ENCODE measurements at regions of chr22 and their contacts with region 1.

Region 1: GRCh38 chr22:41666661-41667258 is 21.9 kb downstream of the SNU13 start:
- DNase-seq: peak; percentile 85 to 92
- ATAC-seq: peak; percentile 87 to 90
- H3K4me3 ChIP-seq: peak overlapping the region; percentile 40
- H3K27ac ChIP-seq: peak overlapping the region; percentile 90 to 97
- H3K4me1 ChIP-seq: peaks cover 41% of the 10 kb centered on the region
- CTCF ChIP-seq: peak; percentile 94
- EP300 ChIP-seq: no peak
- POLR2A ChIP-seq: peak; percentile 41; the same call in 1 of the 2 replicates
- RAD21 ChIP-seq: peak; percentile 57 to 65

Region 2: GRCh38 chr22:41563051-41563711 is 103.6 kb before region 1 on chr22:
- CTCF ChIA-PET with region 1: no interaction called
- POLR2A ChIA-PET with region 1: no interaction called
- DNase-seq: peak; percentile 44 to 53
- ATAC-seq: peak; percentile 36 to 42; a peak in 4 of 6 replicates
- H3K4me3 ChIP-seq: no peak overlapping the region
- H3K27ac ChIP-seq: peak overlapping the region; percentile 63 to 82
- H3K4me1 ChIP-seq: peaks cover 61% of the 10 kb centered on the region
- CTCF ChIP-seq: no peak
- EP300 ChIP-seq: no peak
- POLR2A ChIP-seq: no peak
- RAD21 ChIP-seq: no peak

Region 3: GRCh38 chr22:41589391-41590241 is 77.1 kb before region 1 on chr22 and contains the start of gene PMM1:
- CTCF ChIA-PET with region 1: no interaction called
- POLR2A ChIA-PET with region 1: interaction called, 16 read pairs
- DNase-seq: peak; percentile 93 to 99
- ATAC-seq: peak; percentile 95 to 96
- H3K4me3 ChIP-seq: peak within 1 kb of the TSS; percentile 82
- H3K27ac ChIP-seq: peak within 1 kb of the TSS; percentile 78 to 97
- H3K4me1 ChIP-seq: peaks cover 21% of the 10 kb centered on the region
- CTCF ChIP-seq: no peak
- EP300 ChIP-seq: no peak
- POLR2A ChIP-seq: peak; percentile 72
- RAD21 ChIP-seq: no peak
- polyA plus RNA-seq, gene PMM1: 26.2 and 28.7 TPM in 2 replicates

Region 4: DNA sequence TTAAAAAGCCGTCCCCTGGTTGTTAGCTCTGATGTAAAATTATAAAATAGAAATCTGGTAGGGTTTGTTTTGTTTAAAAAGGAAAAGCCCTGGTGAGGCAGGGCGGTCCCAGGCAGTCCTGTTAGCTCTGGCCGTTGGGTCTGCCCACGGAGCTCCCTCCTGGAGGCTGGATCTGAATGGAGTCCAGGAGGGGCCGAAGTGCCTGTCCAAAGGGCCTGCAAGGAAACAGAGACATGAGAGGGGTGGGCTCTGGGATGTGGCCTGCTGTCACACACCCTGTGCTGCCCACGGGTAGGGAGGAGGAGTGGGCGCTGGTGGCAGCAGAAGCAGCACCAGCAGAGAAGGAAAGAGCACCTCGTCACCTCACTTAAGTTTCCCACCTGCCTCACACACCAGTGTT is 65.8 kb before region 1 on chr22:
- CTCF ChIA-PET with region 1: no interaction called
- POLR2A ChIA-PET with region 1: no interaction called
- DNase-seq: no peak
- ATAC-seq: no peak
- H3K4me3 ChIP-seq: no peak overlapping the region
- H3K27ac ChIP-seq: no peak overlapping the region
- H3K4me1 ChIP-seq: peaks cover 23% of the 10 kb centered on the region
- CTCF ChIP-seq: no peak
- EP300 ChIP-seq: no peak
- POLR2A ChIP-seq: no peak
- RAD21 ChIP-seq: no peak

Region 5: DNA sequence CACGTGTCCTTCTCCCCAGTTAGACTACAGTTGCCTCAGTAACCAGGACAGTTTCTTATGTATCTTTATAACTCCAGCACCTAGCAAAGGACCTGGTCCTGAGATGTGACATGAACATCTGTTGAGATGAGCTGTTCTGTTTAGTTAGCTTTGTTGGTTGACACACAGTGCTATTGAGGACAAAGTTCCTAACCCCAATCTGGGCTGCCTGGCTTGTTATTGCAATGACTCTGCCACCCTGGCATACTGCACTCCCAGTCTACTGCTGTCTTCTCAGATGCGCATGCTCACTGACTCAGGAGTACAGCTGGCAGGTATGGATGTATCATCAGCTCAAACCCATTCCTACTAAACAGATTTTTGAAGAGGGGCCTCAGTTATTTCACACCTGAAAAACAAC is 53.3 kb before region 1 on chr22:
- CTCF ChIA-PET with region 1: no interaction called
- POLR2A ChIA-PET with region 1: no interaction called
- DNase-seq: no peak
- ATAC-seq: no peak
- H3K4me3 ChIP-seq: no peak overlapping the region
- H3K27ac ChIP-seq: no peak overlapping the region
- H3K4me1 ChIP-seq: peaks cover 7% of the 10 kb centered on the region; the same call in 2 of the 3 replicates
- CTCF ChIP-seq: no peak
- EP300 ChIP-seq: no peak
- POLR2A ChIP-seq: no peak
- RAD21 ChIP-seq: no peak

Region 6: GRCh38 chr22:41638124-41638523 is 28.6 kb before region 1 on chr22:
- CTCF ChIA-PET with region 1: interaction called, 11 read pairs
- POLR2A ChIA-PET with region 1: no interaction called
- DNase-seq: peak in 1 of 2 experiments; percentile 42
- ATAC-seq: peak; percentile 39 to 43; a peak in 4 of 6 replicates
- H3K4me3 ChIP-seq: no peak overlapping the region
- H3K27ac ChIP-seq: peak overlapping the region; percentile 54 to 63
- H3K4me1 ChIP-seq: peaks cover 37% of the 10 kb centered on the region
- CTCF ChIP-seq: no peak
- EP300 ChIP-seq: no peak
- POLR2A ChIP-seq: no peak
- RAD21 ChIP-seq: no peak

Region 7: GRCh38 chr22:41650821-41651220 is 15.9 kb before region 1 on chr22:
- CTCF ChIA-PET with region 1: interaction called, 19 read pairs
- POLR2A ChIA-PET with region 1: interaction called, 6 read pairs
- DNase-seq: no peak
- ATAC-seq: no peak
- H3K4me3 ChIP-seq: no peak overlapping the region
- H3K27ac ChIP-seq: no peak overlapping the region
- H3K4me1 ChIP-seq: no peaks in the 10 kb centered on the region
- CTCF ChIP-seq: no peak
- EP300 ChIP-seq: no peak
- POLR2A ChIP-seq: no peak
- RAD21 ChIP-seq: no peak

Region 8: DNA sequence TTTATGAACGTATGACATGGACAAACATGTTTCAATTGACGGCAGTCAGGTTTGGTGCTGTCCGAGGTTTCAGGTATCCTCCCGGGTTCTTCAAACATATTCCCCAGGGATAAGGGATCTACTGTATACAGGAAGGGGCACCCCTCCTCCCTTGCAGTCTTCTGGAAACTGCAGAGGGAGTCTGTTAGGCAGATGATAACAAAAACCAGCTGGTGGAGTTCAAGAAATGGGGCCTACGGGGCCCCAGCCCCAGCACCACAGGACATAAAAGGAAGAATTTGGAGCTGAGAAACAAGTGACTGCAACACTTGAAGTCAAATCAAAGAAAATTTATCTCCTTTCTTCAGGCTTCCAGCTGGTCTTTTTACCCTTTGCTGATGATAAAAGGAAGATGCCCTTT is 10.2 kb before region 1 on chr22:
- CTCF ChIA-PET with region 1: interaction called, 19 read pairs
- POLR2A ChIA-PET with region 1: interaction called, 4 read pairs
- DNase-seq: no peak
- ATAC-seq: no peak
- H3K4me3 ChIP-seq: no peak overlapping the region
- H3K27ac ChIP-seq: no peak overlapping the region
- H3K4me1 ChIP-seq: no peaks in the 10 kb centered on the region
- CTCF ChIP-seq: no peak
- EP300 ChIP-seq: no peak
- POLR2A ChIP-seq: no peak
- RAD21 ChIP-seq: no peak